ENCODE measurements at regions of chr12 and their contacts with region 1.

Region 1: GRCh38 chr12:112108201-112109079 is at the start of gene NAA25:
- DNase-seq: peak; percentile 96
- H3K4me3 Mint-ChIP-seq: peak within 1 kb of the TSS; percentile 97
- H3K27ac Mint-ChIP-seq: peak within 1 kb of the TSS; percentile 98
- H3K4me1 Mint-ChIP-seq: peaks cover 38% of the 10 kb centered on the region
- H3K27me3 Mint-ChIP-seq: no peaks in the 10 kb centered on the region
- total RNA-seq, gene NAA25: 60.0 and 62.1 TPM in 2 replicates

Region 2: DNA sequence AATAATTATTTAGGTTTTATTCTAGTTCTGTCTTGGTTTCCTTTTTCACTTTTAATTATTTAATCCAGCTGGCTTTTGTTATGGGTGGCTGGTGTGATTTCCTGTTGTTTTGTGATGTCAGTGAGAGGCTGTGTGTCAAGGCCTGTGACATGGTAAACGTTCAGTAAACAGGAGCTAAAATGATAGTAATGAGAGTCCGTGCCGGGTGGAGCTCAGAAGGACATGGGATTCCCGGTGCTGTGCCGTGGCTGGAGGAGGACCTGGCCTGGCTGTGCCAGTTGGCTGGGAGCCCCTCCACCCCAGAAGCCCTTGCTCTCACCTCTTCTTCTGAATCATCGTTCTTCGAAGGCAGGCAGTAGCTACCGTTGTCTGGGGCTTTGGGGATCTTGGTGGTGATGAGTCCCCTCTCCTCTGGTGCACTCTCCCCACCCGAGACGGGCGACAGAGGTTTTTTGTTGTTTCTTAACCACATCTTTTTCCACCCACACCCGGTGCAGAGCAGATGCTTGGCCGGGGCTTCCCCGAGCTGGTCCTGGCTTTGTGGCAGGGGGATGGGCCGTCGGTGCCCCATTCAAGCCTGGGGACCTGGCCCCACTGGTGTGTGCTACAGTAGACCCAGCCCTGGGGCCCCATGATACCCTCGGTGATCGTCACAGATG is 673.6 kb before region 1 on chr12:
- intact Hi-C with region 1: loop called (anchors 10 kb)
- DNase-seq: peak; percentile 96
- H3K4me3 Mint-ChIP-seq: peak overlapping the region; percentile 78
- H3K27ac Mint-ChIP-seq: peak overlapping the region; percentile 97
- H3K4me1 Mint-ChIP-seq: peaks cover 83% of the 10 kb centered on the region
- H3K27me3 Mint-ChIP-seq: no peaks in the 10 kb centered on the region

Region 3: DNA sequence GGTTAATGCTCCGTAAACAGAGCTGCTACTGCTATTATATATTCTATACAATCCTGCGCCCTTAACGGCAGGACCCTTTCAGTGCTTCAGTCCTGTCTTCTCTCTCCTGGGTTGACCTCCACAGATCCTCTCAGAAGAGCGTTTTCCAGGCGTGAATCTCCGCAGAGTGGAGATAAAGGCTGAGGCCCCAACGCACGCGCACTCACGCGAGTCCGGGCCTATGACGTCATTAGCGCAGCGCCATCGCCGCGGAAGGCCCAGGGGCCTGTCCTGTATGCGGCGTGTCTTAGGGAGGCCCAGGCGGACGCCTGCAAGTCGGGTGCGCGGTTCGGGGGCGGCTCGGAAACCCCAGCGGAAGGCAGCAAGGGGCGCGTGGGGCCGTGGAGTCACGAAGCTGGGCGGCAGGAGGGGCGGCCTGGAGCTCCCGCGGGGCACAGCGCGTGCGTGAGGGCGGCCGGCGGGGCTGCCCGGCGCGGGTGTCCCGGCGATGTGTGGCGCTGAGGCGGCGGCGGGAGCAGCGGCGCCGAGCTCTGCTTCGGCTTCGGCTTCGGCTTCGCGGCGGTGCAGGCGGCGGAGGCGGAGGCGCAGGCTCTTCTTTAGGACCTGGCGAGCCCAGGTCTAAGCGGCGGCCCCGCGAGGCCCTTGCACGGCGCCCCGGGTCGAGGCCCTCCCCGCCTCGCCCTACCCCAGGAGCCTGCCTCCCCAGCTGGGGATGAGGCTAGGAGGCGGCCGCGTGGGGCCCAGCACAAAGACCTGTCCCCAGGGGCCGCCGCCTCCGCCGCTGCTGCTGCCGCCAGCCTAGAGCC is 266.5 kb before region 1 on chr12 and contains the start of gene MAPKAPK5:
- intact Hi-C with region 1: loop called (anchors 1 kb)
- DNase-seq: peak; percentile 99
- H3K4me3 Mint-ChIP-seq: peak within 1 kb of the TSS; percentile 98
- H3K27ac Mint-ChIP-seq: peak within 1 kb of the TSS; percentile 98
- H3K4me1 Mint-ChIP-seq: peaks cover 40% of the 10 kb centered on the region
- H3K27me3 Mint-ChIP-seq: peaks cover 2% of the 10 kb centered on the region
- total RNA-seq, gene MAPKAPK5: 76.0 and 80.2 TPM in 2 replicates

Region 4: GRCh38 chr12:112096667-112097066 is 11.8 kb before region 1 on chr12:
- intact Hi-C with region 1: loop called (anchors 1 kb)
- DNase-seq: peak; percentile 61
- H3K4me3 Mint-ChIP-seq: peak overlapping the region; percentile 56
- H3K27ac Mint-ChIP-seq: peak overlapping the region; percentile 90
- H3K4me1 Mint-ChIP-seq: peaks cover 34% of the 10 kb centered on the region
- H3K27me3 Mint-ChIP-seq: no peaks in the 10 kb centered on the region

Region 5: GRCh38 chr12:112125250-112125999 is 17.0 kb after region 1 on chr12 and contains the start of gene TRAFD1:
- intact Hi-C with region 1: loop called (anchors 1 kb)
- DNase-seq: peak; percentile 100
- H3K4me3 Mint-ChIP-seq: peak within 1 kb of the TSS; percentile 82
- H3K27ac Mint-ChIP-seq: peak within 1 kb of the TSS; percentile 88
- H3K4me1 Mint-ChIP-seq: peaks cover 32% of the 10 kb centered on the region
- H3K27me3 Mint-ChIP-seq: peaks cover 4% of the 10 kb centered on the region
- total RNA-seq, gene TRAFD1: 45.6 and 48.3 TPM in 2 replicates

Region 6: GRCh38 chr12:112130441-112130998 is 22.1 kb after region 1 on chr12:
- intact Hi-C with region 1: loop called (anchors 1 kb)
- DNase-seq: peak; percentile 76
- H3K4me3 Mint-ChIP-seq: peak overlapping the region; percentile 78
- H3K27ac Mint-ChIP-seq: peak overlapping the region; percentile 85
- H3K4me1 Mint-ChIP-seq: peaks cover 44% of the 10 kb centered on the region
- H3K27me3 Mint-ChIP-seq: no peaks in the 10 kb centered on the region

Region 7: DNA sequence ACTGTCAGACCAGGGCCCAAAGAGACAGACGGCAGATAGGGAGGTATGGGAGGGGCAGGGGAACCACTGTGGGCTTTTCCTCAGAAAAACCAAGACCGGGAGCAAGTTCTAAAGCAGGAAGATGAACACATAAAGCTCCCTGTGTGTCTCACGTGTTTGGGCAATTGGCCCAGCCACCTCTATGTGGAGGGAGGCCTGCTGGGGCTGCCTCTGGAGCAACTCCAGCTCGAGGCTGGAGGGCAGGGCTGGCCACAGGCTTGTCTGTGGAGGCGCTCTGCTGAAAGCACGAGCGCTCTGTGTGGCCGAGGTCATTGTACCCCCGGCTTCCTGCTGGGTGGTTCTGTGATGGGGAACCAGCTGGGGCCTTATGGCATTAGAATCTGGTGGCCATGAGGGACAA is 53.3 kb after region 1 on chr12:
- intact Hi-C with region 1: no loop called
- DNase-seq: no peak
- H3K4me3 Mint-ChIP-seq: no peak overlapping the region
- H3K27ac Mint-ChIP-seq: peak overlapping the region; percentile 26
- H3K4me1 Mint-ChIP-seq: peaks cover 20% of the 10 kb centered on the region
- H3K27me3 Mint-ChIP-seq: no peaks in the 10 kb centered on the region